Posterior vena cava (tissue), 2 donors: ENCODE measurements at regions of chr12 and their contacts with region 1.

Region 1: GRCh38 chr12:121697098-121697698 is 15.4 kb upstream of the TMEM120B start:
- DNase-seq: no peak

Region 2: DNA sequence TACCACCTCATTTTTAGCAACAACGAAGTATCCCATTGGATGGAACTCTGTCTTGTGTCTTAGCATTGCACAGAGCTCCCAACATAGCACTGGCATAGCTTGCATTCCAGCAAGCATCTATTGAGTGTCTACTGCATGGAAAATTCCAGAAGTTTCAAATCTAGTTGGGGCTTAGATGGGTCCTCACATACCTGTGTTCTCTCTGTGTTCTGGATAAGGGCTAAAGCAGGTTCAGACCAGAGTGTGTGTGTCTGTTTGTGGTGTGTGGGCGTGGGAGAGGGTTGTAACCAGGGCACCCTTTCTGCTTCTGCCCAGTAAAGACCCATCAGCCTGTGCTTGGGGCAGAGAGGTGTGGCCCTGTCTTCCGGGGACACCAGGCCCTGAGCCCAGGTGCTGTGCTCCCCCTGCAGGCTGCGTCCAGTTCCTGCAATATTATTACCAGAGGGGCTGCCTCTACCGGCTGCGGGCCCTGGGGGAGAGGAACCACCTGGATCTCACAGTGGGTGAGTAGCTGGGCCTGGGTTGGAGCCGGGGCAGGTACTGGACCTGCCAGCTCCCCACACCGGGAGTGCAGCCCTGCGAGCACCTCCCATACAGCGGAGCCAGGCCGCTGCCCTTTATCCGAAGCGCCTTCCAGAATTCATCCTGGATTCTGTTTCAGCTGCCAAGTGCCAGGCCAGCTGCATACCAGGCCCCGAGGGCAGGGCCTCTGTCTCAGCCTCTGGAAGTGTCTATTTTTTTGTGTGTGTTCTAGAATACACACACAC is 76.0 kb after region 1 on chr12:
- intact Hi-C with region 1: loop called (anchors 5 to 10 kb)
- DNase-seq: peak; percentile 88

Region 3: GRCh38 chr12:121793838-121794533 is 96.8 kb after region 1 on chr12:
- intact Hi-C with region 1: loop called (anchors 2 to 5 kb)
- DNase-seq: peak; percentile 98

Region 4: GRCh38 chr12:121888478-121889266 is 191.5 kb after region 1 on chr12 and contains the start of gene PSMD9:
- intact Hi-C with region 1: loop called in 1 of 2 experiments (anchors 10 kb)
- DNase-seq: peak; percentile 99
- total RNA-seq, gene PSMD9: 37.9 to 42.1 TPM